Activated B cell treated with CpG ODN at 0.5 μM for 24 hours (primary cell): ENCODE measurements at regions of chr11 and their contacts with region 1.

Region 1: GRCh38 chr11:72222907-72223614 is 1.5 kb upstream of the INPPL1 start:
- DNase-seq: peak; percentile 90
- ATAC-seq: peak; percentile 76
- H3K4me3 Mint-ChIP-seq: peak overlapping the region; percentile 87
- H3K27ac Mint-ChIP-seq: peak overlapping the region; percentile 93
- H3K4me1 Mint-ChIP-seq: peaks cover 44% of the 10 kb centered on the region
- H3K27me3 Mint-ChIP-seq: no peaks in the 10 kb centered on the region
- CTCF ChIP-seq: no peak

Region 2: GRCh38 chr11:71928737-71929452 is 294.2 kb before region 1 on chr11 and contains the start of gene RNF121:
- CTCF ChIA-PET with region 1: no interaction called
- POLR2A ChIA-PET with region 1: interaction called, 5 read pairs
- intact Hi-C with region 1: loop called (anchors 2 kb)
- DNase-seq: peak; percentile 90
- ATAC-seq: peak; percentile 88
- H3K4me3 Mint-ChIP-seq: peak within 1 kb of the TSS; percentile 95
- H3K27ac Mint-ChIP-seq: peak within 1 kb of the TSS; percentile 98
- H3K4me1 Mint-ChIP-seq: peaks cover 58% of the 10 kb centered on the region
- H3K27me3 Mint-ChIP-seq: no peaks in the 10 kb centered on the region
- CTCF ChIP-seq: no peak
- total RNA-seq, gene RNF121: 44.4 and 47.4 TPM in 2 replicates

Region 3: GRCh38 chr11:72080256-72080974 is 142.6 kb before region 1 on chr11 and contains the starts of genes LRRC51 and NUMA1:
- CTCF ChIA-PET with region 1: no interaction called
- POLR2A ChIA-PET with region 1: no interaction called
- intact Hi-C with region 1: loop called (anchors 1 kb)
- DNase-seq: peak; percentile 94
- ATAC-seq: peak; percentile 90
- H3K4me3 Mint-ChIP-seq: peak within 1 kb of the TSS; percentile 95
- H3K27ac Mint-ChIP-seq: peak within 1 kb of the TSS; percentile 91
- H3K4me1 Mint-ChIP-seq: peaks cover 35% of the 10 kb centered on the region
- H3K27me3 Mint-ChIP-seq: no peaks in the 10 kb centered on the region
- CTCF ChIP-seq: no peak
- total RNA-seq, gene LRRC51: 4.1 and 4.5 TPM in 2 replicates
- total RNA-seq, gene NUMA1: 146 and 163 TPM in 2 replicates

Region 4: DNA sequence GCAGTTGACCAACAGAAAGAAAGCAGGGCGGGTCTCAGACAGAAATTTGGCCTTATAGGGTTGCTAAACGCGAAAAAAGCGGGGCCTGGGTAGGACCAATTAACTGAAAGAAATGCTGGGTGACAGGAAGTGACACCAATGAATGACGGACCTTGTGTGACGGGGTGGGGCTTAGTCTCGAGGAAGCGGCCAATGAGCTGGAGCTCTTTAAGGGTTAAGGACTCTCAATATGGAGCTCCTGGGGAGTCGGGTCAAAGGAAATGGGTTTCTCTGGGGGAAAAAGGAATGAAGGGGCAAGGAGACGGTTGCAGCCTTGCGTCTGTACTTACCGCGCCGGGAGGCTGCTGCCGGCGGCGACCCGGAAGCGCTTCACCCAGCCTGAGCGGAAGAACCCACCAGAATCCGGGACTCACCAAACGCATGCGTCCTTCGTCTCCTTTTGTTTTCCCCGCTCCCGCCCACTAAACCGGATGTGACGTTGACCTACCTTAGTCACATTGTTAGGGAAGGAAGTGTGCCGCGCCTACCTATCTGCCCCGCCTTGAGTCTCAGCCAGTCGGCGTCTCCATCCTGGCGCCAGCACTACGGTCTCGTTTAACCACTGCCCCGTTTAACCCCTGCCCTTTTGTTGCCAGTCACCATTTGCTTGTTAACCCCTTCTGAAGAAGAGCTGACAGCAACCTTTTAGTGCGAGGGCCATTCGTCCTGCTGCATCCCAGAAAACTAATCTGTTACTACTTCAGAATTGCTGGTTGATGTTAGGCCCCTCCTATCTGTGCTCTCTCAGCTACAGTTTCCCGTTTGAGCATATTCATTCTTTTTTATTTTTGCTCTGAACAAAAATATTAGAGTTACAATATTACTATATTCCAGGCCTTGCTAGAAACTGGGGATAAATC is 110.5 kb before region 1 on chr11 and contains the start of gene ANAPC15:
- CTCF ChIA-PET with region 1: no interaction called
- POLR2A ChIA-PET with region 1: interaction called, 28 read pairs
- intact Hi-C with region 1: loop called (anchors 1 kb)
- DNase-seq: peak; percentile 90
- ATAC-seq: peak; percentile 90
- H3K4me3 Mint-ChIP-seq: peak within 1 kb of the TSS; percentile 97
- H3K27ac Mint-ChIP-seq: peak within 1 kb of the TSS; percentile 100
- H3K4me1 Mint-ChIP-seq: peaks cover 25% of the 10 kb centered on the region
- H3K27me3 Mint-ChIP-seq: peaks cover 13% of the 10 kb centered on the region
- CTCF ChIP-seq: no peak
- total RNA-seq, gene ANAPC15: 44.4 and 56.3 TPM in 2 replicates

Region 5: GRCh38 chr11:72238040-72238450 is 15.0 kb after region 1 on chr11:
- CTCF ChIA-PET with region 1: interaction called, 11 read pairs
- POLR2A ChIA-PET with region 1: interaction called, 21 read pairs
- intact Hi-C with region 1: loop called (anchors 2 kb)
- DNase-seq: no peak
- ATAC-seq: peak; percentile 68
- H3K4me3 Mint-ChIP-seq: no peak overlapping the region
- H3K27ac Mint-ChIP-seq: no peak overlapping the region
- H3K4me1 Mint-ChIP-seq: peaks cover 41% of the 10 kb centered on the region
- H3K27me3 Mint-ChIP-seq: peaks cover 33% of the 10 kb centered on the region
- CTCF ChIP-seq: no peak

Region 6: DNA sequence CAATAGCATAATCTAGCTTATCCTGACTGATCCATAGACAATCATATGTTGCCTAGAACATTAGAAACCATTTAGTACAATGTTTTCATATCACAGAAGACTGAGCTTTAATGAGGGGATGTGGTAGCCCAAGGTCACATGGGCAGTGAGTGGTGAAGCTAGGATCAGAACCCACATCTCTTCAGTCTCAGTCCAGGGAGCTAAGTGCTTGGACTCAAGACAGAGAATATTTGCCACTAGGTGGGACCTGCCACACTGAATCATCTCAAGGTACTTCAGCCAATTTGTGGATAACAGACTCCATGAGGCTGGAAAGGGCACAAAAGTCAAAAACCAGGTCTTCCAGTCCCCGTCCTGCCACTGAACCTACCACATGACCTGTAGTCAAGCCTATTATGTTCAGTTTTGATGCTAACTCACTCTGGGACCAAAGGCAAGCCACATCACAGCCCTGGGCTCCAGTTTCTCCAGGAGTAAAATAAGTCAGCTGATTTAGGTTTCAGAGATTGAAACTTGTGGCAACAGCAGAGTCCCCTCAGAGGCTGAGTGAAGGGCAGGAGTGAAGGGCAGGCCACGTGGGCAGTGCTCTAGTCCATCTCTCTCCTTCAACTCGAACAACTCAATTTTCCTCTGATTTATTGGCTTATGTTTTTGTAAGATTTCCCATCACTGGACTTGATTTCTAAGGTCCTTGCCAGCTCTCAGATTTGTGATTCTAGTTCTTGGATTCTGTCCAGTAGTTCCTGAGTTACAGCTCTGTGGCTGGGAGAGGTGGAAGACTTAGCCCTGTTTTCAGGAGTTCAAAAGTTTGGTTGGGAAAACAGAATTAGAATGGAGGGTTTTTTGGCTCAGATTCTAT is 105.5 kb after region 1 on chr11:
- CTCF ChIA-PET with region 1: no interaction called
- POLR2A ChIA-PET with region 1: no interaction called
- intact Hi-C with region 1: no loop called
- DNase-seq: no peak
- ATAC-seq: no peak
- H3K4me3 Mint-ChIP-seq: no peak overlapping the region
- H3K27ac Mint-ChIP-seq: no peak overlapping the region
- H3K4me1 Mint-ChIP-seq: peaks cover 7% of the 10 kb centered on the region
- H3K27me3 Mint-ChIP-seq: no peaks in the 10 kb centered on the region
- CTCF ChIP-seq: no peak

Region 7: GRCh38 chr11:72814286-72815109 is 591.4 kb after region 1 on chr11 and contains the start of gene ATG16L2:
- CTCF ChIA-PET with region 1: no interaction called
- POLR2A ChIA-PET with region 1: no interaction called
- intact Hi-C with region 1: loop called (anchors 10 kb)
- DNase-seq: peak; percentile 97
- ATAC-seq: peak; percentile 75
- H3K4me3 Mint-ChIP-seq: peak within 1 kb of the TSS; percentile 98
- H3K27ac Mint-ChIP-seq: peak within 1 kb of the TSS; percentile 94
- H3K4me1 Mint-ChIP-seq: peaks cover 54% of the 10 kb centered on the region
- H3K27me3 Mint-ChIP-seq: no peaks in the 10 kb centered on the region
- CTCF ChIP-seq: no peak
- total RNA-seq, gene ATG16L2: 73.5 and 96.7 TPM in 2 replicates